Gastrocnemius medialis (tissue), 4 donors: ENCODE measurements at regions of chr1 and their contacts with region 1.

Region 1: GRCh38 chr1:225474986-225475820 is 47.4 kb upstream of the LBR start:
- DNase-seq: peak; percentile 26 to 39
- ATAC-seq: peak; percentile 78 to 90
- H3K4me3 ChIP-seq: peak overlapping the region in 2 of 4 donors; percentile 30 to 39
- H3K27ac ChIP-seq: no peak overlapping the region
- H3K4me1 ChIP-seq: peaks cover 2 to 10% of the 10 kb centered on the region in 2 donors
- H3K27me3 ChIP-seq: no peaks in the 10 kb centered on the region
- CTCF ChIP-seq: peak; percentile 100
- POLR2A ChIP-seq: no peak

Region 2: DNA sequence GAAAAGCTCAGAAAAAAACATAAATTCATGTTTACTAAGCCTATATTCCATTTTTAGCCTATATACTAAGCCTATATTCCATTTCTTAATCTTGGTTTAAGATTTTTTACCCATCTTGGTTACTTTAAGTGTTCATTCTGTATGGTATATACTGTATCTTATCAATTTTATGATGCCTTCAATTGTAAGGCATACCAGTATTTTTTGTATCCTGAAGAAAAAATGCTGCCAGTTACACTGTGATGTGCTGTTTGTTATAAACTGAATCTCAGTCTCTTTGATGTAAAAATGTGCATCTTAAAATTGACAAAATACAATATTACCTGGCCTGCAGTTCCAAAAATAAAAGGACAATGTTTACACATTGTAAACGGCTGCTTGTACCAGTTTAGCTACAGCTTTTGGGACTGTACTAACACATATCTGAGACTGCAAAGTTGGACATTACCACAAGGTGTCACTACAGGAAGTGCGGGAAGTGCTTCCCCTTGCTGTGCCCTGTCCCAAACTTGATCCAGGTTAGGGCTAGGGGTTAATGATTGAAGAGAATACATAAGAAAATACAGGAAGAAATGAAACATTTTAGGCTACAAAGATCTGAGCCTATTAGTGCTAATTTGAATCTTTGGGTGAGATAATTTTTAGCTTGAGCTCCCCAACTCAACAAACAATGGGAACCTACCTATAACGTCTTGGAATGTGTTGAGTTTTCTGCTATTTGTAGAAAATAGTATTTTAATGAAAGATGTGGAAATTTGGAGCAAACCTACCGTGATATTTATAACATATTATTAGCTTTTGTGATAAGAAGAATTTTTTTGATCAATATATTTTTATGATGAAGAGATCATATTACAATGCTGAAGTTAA is 156.3 kb before region 1 on chr1:
- in situ Hi-C with region 1: no loop called
- intact Hi-C with region 1: no loop called
- DNase-seq: no peak
- ATAC-seq: peak in 1 of 2 donors; percentile 53
- H3K4me3 ChIP-seq: no peak overlapping the region
- H3K27ac ChIP-seq: no peak overlapping the region
- H3K4me1 ChIP-seq: no peaks in the 10 kb centered on the region
- H3K27me3 ChIP-seq: no peaks in the 10 kb centered on the region
- CTCF ChIP-seq: peak in 3 of 5 experiments; percentile 13 to 65 (median 57)
- POLR2A ChIP-seq: no peak

Region 3: DNA sequence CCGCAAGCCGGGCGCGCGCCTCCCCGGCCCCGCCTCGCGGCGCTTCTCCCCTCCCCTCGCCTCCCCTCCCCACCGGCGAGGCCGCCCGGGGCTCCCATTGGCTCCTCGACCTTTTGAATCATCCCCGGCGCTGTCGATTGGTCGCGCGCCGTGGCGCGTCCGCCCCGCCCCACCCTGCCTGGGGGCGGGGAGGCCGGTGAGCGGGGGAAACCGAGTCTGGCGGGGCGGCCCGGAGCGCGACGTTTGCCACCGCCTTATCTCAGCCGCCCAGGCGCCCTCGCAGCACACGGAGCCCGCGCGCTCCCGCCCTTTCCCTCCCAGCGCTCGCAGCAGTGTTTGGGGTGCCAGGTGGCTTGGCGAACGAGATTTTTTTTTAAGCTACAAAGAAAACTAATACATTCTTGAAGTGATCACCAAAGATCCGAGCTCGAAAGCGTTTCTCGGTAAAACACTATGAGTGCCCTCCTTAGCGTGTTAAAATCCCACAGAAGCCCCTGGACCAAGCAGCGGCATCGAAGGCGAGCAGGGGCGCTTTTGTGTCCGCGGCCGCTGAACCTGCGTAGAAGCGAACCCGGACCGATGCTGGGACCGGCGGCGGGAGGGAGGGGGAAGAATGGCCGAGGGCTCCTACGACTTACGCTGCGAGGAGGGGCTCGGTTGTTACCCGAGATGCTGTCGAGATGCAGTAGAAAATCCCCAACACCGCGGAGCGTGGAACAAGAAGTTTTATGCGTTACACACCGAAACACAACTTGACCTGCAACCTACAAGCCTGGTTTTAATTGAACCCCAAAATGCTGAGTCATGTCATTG is 46.9 kb before region 1 on chr1:
- in situ Hi-C with region 1: no loop called
- intact Hi-C with region 1: no loop called
- DNase-seq: peak; percentile 89
- ATAC-seq: peak; percentile 91 to 93
- H3K4me3 ChIP-seq: peak overlapping the region; percentile 80 to 98 (median 96)
- H3K27ac ChIP-seq: peak overlapping the region; percentile 89 to 95 (median 92)
- H3K4me1 ChIP-seq: peaks cover 19 to 35% of the 10 kb centered on the region in 2 donors
- H3K27me3 ChIP-seq: no peaks in the 10 kb centered on the region
- CTCF ChIP-seq: no peak
- POLR2A ChIP-seq: peak; percentile 83 to 92

Region 4: DNA sequence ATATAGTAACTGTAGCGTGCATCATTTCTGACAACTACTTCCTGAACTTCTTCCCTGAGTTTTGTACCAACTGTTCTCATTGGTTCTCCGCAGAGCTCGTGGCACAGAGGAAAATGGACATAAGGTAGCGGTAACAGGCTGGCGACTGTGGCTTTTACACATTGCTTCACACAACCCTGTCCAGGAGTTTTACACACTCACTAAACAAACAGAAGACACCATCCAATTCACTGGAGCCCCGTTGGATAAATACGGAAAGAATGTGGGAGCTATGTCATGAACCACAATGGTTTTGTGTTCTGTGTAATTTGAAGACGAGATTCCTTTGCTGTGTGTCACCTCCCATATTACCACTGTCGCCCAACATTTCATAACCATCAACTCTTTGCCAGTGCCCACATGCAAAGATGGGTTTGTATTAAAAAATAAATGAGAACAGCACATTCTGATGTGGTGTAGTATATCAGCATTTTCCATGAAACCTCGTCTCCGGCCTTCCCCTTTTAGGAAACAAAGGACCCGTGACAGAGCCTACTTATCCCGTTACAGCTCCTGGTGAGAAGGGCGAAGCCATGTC is 225.0 kb after region 1 on chr1:
- in situ Hi-C with region 1: no loop called
- intact Hi-C with region 1: loop called (anchors 1 kb)
- DNase-seq: peak; percentile 58 to 60
- ATAC-seq: peak; percentile 89 to 90
- H3K4me3 ChIP-seq: peak overlapping the region; percentile 41 to 57 (median 50)
- H3K27ac ChIP-seq: peak overlapping the region; percentile 85 to 93 (median 87)
- H3K4me1 ChIP-seq: peaks cover 13 to 27% of the 10 kb centered on the region in 2 donors
- H3K27me3 ChIP-seq: no peaks in the 10 kb centered on the region
- CTCF ChIP-seq: no peak
- POLR2A ChIP-seq: no peak

Region 5: DNA sequence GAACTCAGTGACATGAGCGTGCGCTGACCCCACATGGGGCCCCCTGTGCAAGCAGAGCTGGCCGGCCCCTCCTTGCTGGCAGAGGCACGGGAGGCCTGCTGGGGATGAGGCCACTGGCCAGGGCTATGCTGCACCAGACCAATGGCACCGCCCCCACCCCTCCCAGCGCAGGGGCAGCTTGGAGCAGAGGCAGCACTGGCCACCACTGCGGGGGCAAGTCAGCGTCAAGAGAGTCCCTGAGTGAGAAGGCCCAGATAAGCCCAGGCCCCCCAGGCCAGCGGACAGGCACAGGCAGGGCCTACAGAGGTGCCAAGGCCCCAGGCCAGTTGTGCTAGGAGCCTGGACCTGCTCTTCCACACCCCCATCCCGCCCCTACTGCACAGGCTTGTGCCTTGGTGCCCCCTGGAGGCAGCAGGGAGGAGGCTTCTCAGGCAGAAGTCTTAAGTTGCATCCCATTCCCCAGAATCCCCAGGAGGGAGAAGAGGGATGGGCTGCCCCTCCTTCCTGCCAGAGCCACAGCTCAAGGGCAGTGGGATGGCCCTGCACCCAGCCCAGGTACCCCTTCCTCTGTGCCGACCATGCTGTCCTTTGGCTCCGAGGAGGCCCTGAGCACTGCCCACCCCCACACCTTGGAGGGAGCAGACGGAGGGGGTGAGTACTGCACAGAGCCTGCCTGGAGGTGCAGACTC is 370.5 kb after region 1 on chr1:
- in situ Hi-C with region 1: loop called in 1 of 4 experiments (anchors 10 kb)
- intact Hi-C with region 1: loop called (anchors 1 kb)
- DNase-seq: peak; percentile 52 to 74
- ATAC-seq: peak; percentile 49 to 83
- H3K4me3 ChIP-seq: no peak overlapping the region
- H3K27ac ChIP-seq: peak overlapping the region; percentile 15 to 61 (median 38)
- H3K4me1 ChIP-seq: peaks cover 3 to 5% of the 10 kb centered on the region in 2 donors
- H3K27me3 ChIP-seq: no peaks in the 10 kb centered on the region
- CTCF ChIP-seq: peak; percentile 62 to 83 (median 79)
- POLR2A ChIP-seq: no peak

Region 6: GRCh38 chr1:225911191-225912130 is 436.3 kb after region 1 on chr1:
- in situ Hi-C with region 1: loop called in 3 of 4 experiments (anchors 5 to 10 kb)
- intact Hi-C with region 1: loop called (anchors 1 kb)
- DNase-seq: peak in 1 of 2 donors; percentile 40
- ATAC-seq: peak; percentile 55 to 84
- H3K4me3 ChIP-seq: peak overlapping the region in 2 of 4 donors; percentile 10 to 17
- H3K27ac ChIP-seq: no peak overlapping the region
- H3K4me1 ChIP-seq: no peaks in the 10 kb centered on the region
- H3K27me3 ChIP-seq: no peaks in the 10 kb centered on the region
- CTCF ChIP-seq: peak; percentile 66 to 92 (median 83)
- POLR2A ChIP-seq: no peak

Region 7: DNA sequence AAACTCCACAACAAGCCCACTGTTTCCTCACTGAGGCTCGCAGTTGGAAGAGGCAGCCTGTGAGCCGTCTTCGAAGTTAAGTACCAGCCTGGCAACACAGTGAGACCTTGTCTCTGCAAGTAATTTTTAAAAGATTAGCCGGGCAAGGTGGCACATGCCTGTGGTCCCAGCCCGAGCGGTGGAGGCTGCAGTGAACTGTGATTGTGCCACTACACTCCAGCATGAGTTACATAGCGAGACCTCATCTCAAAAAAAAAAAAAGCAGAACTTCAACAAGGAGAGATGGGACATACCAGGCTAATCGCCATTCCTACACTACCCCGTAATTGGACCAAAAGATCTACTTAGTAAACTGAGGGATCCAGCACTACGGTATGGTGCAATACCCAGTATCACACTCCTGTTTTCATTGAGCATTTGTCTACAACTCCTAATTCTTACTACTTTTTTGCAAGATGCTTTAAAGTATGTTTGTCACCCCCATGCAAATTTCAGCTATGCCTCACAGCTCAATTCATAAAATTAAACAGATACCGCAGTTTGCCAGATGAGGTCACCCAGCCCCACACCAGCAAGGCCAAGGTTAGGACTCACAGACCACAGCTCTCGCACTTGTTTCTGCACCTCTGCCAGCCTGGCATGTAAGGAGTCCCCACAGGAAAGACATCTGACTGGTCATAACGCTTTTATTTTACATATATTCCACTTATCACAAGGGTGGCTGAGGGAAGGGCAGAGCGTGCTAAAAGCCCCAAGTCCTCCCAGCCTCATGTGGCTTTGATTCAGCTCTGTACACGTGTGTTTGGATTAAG is 502.9 kb after region 1 on chr1:
- in situ Hi-C with region 1: loop called (anchors 5 to 10 kb)
- intact Hi-C with region 1: loop called (anchors 1 kb)
- DNase-seq: no peak
- ATAC-seq: no peak
- H3K4me3 ChIP-seq: no peak overlapping the region
- H3K27ac ChIP-seq: no peak overlapping the region
- H3K4me1 ChIP-seq: peaks cover 13 to 17% of the 10 kb centered on the region in 2 donors
- H3K27me3 ChIP-seq: no peaks in the 10 kb centered on the region
- CTCF ChIP-seq: no peak
- POLR2A ChIP-seq: no peak

Region 8: GRCh38 chr1:225987491-225988316 is 512.5 kb after region 1 on chr1:
- in situ Hi-C with region 1: loop called in 2 of 4 experiments (anchors 5 to 10 kb)
- intact Hi-C with region 1: no loop called
- DNase-seq: no peak
- ATAC-seq: peak in 1 of 2 donors; percentile 39
- H3K4me3 ChIP-seq: no peak overlapping the region
- H3K27ac ChIP-seq: peak overlapping the region; percentile 12 to 29 (median 16)
- H3K4me1 ChIP-seq: peaks cover 0 to 13% of the 10 kb centered on the region in 2 donors
- H3K27me3 ChIP-seq: no peaks in the 10 kb centered on the region
- CTCF ChIP-seq: peak; percentile 31 to 72 (median 65)
- POLR2A ChIP-seq: no peak